Caco-2 (cell line): ENCODE measurements at regions of chr10 and their contacts with region 1.

Region 1: GRCh38 chr10:109877546-109877945 is 45.8 kb downstream of the XPNPEP1 start:
- DNase-seq: no peak
- H3K4me3 ChIP-seq: no peak overlapping the region
- H3K4me3 Mint-ChIP-seq: no peak overlapping the region
- H3K27ac Mint-ChIP-seq: no peak overlapping the region
- H3K4me1 ChIP-seq: 0 out of 2 replicates have a peak, but pooled peaks cover 8% of the 10 kb centered on the region
- H3K4me1 Mint-ChIP-seq: no peaks in the 10 kb centered on the region
- H3K27me3 ChIP-seq: no peaks in the 10 kb centered on the region
- H3K27me3 Mint-ChIP-seq: no peaks in the 10 kb centered on the region
- CTCF ChIP-seq: no peak

Region 2: GRCh38 chr10:110076559-110077318 is 199.2 kb after region 1 on chr10:
- CTCF ChIA-PET with region 1: no interaction called
- POLR2A ChIA-PET with region 1: interaction called, 10 read pairs
- intact Hi-C with region 1: no loop called
- DNase-seq: peak; percentile 50 to 69
- H3K4me3 ChIP-seq: no peak overlapping the region
- H3K4me3 Mint-ChIP-seq: peak overlapping the region; percentile 47
- H3K27ac Mint-ChIP-seq: peak overlapping the region; percentile 36
- H3K4me1 ChIP-seq: peaks cover 59% of the 10 kb centered on the region
- H3K4me1 Mint-ChIP-seq: peaks cover 53% of the 10 kb centered on the region
- H3K27me3 ChIP-seq: no peaks in the 10 kb centered on the region
- H3K27me3 Mint-ChIP-seq: no peaks in the 10 kb centered on the region
- CTCF ChIP-seq: no peak